Activated CD4-positive, alpha-beta T cell treated with anti-CD3 and anti-CD28 coated beads for 36 hours (primary cell): ENCODE measurements at regions of chr1 and their contacts with region 1.

Region 1: DNA sequence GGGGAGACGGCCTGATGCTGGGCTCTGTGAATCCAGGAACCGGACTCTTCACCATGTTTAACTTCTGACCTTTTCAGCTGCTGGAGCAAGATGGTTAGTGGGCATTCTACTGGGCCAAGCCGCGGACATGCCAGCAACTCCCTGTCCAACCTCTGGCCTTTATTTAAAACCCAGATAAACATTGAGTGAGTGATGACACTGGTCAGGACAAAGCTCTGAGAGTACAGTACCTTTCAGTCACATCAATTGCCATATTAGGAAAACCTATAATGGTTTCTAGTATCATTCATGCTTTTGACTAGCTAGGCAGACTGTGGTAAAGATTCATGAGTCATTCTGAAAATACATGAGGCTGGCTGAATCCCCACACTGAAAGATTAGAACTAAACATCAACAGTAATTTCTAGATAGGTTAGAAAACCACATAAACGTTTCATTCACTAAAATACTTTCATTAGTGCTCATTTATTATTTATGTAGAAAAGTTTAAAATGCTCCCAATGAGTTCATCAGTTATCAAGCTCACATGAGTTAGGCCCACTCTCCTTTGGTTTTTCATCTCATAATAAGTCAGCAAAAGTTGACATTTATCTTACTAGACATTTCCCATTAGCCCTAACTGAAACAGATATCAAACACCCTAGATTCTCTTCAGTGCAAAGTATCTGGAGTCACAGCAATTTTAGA is 7.1 kb upstream of the ACTA1 start:
- DNase-seq: peak; percentile 20
- ATAC-seq: peak; percentile 94
- H3K4me3 Mint-ChIP-seq: no peak overlapping the region
- H3K27ac Mint-ChIP-seq: peak overlapping the region; percentile 52
- H3K4me1 Mint-ChIP-seq: peaks cover 23% of the 10 kb centered on the region
- H3K27me3 Mint-ChIP-seq: peaks cover 11% of the 10 kb centered on the region

Region 2: DNA sequence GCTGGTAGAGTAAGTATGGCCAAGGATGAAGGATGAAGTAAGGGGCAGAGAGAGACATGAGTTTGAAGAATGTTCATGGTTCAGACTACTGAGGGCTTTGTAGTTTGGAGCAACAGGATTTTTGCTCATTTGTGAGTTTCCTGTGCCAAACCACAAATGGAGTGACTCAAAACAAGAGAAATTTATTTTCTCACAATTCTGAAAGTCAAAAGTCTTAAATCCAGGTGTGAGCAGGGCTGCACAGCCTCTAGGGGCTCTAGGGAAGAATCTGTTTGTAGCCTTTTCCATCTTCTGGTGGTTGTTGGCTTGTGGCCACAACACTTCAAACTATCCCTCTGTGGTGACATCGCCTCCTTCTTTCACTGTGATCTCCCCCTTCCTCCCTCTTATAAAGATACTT is 646.8 kb before region 1 on chr1:
- CTCF ChIA-PET with region 1: no interaction called
- POLR2A ChIA-PET with region 1: no interaction called
- intact Hi-C with region 1: loop called in 1 of 2 experiments (anchors 2 kb)
- DNase-seq: peak; percentile 60
- ATAC-seq: peak; percentile 70
- H3K4me3 Mint-ChIP-seq: no peak overlapping the region
- H3K27ac Mint-ChIP-seq: no peak overlapping the region
- H3K4me1 Mint-ChIP-seq: peaks cover 6% of the 10 kb centered on the region
- H3K27me3 Mint-ChIP-seq: no peaks in the 10 kb centered on the region

Region 3: DNA sequence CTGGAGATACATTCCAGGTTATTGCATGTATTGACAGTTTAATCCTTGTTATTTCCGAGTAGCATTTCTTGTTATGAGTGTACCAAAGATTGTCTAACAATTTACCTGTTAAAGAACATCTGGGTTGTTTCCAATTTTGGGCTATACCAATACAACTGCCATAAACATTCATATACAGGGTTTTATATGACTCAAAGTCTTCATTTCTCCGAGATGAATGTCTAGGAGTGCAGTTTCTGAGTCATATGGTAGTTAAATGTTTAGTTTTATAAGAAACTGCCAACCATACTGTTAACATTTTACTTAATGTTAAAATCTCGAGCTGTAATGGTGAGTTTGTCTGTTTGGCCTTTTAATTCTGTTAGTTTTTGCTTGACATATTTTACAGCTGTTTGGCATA is 160.1 kb before region 1 on chr1:
- CTCF ChIA-PET with region 1: no interaction called
- POLR2A ChIA-PET with region 1: no interaction called
- intact Hi-C with region 1: loop called (anchors 1 to 2 kb)
- DNase-seq: no peak
- ATAC-seq: peak; percentile 85
- H3K4me3 Mint-ChIP-seq: no peak overlapping the region
- H3K27ac Mint-ChIP-seq: no peak overlapping the region
- H3K4me1 Mint-ChIP-seq: peaks cover 36% of the 10 kb centered on the region
- H3K27me3 Mint-ChIP-seq: no peaks in the 10 kb centered on the region

Region 4: GRCh38 chr1:229341774-229342655 is 99.0 kb before region 1 on chr1:
- CTCF ChIA-PET with region 1: no interaction called
- POLR2A ChIA-PET with region 1: interaction called, 4 read pairs
- intact Hi-C with region 1: loop called (anchors 1 kb)
- DNase-seq: peak; percentile 85
- ATAC-seq: peak; percentile 76
- H3K4me3 Mint-ChIP-seq: peak overlapping the region; percentile 88
- H3K27ac Mint-ChIP-seq: peak overlapping the region; percentile 77
- H3K4me1 Mint-ChIP-seq: peaks cover 45% of the 10 kb centered on the region
- H3K27me3 Mint-ChIP-seq: peaks cover 9% of the 10 kb centered on the region

Region 5: DNA sequence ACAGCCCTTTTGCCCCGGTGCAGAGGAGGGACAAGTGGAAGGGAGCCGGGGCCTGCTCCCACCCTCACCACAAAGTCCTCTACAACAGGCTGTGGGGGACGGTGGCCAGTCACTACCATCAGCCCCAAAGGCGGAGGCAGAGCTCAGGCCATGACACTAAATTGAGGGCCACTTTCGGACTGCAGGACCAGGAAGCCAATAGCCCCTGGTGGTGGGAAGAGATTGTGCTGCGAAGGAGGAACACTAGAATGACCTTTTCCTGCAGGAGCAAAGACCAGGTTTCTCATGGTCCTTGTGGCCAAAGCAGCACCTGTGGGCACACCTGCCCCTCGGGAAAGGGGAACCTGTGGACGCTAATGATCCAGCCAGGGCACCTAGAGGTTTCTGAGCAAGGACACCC is 37.4 kb before region 1 on chr1:
- CTCF ChIA-PET with region 1: no interaction called
- POLR2A ChIA-PET with region 1: no interaction called
- intact Hi-C with region 1: no loop called
- DNase-seq: no peak
- ATAC-seq: no peak
- H3K4me3 Mint-ChIP-seq: no peak overlapping the region
- H3K27ac Mint-ChIP-seq: no peak overlapping the region
- H3K4me1 Mint-ChIP-seq: peaks cover 7% of the 10 kb centered on the region
- H3K27me3 Mint-ChIP-seq: peaks cover 44% of the 10 kb centered on the region

Region 6: DNA sequence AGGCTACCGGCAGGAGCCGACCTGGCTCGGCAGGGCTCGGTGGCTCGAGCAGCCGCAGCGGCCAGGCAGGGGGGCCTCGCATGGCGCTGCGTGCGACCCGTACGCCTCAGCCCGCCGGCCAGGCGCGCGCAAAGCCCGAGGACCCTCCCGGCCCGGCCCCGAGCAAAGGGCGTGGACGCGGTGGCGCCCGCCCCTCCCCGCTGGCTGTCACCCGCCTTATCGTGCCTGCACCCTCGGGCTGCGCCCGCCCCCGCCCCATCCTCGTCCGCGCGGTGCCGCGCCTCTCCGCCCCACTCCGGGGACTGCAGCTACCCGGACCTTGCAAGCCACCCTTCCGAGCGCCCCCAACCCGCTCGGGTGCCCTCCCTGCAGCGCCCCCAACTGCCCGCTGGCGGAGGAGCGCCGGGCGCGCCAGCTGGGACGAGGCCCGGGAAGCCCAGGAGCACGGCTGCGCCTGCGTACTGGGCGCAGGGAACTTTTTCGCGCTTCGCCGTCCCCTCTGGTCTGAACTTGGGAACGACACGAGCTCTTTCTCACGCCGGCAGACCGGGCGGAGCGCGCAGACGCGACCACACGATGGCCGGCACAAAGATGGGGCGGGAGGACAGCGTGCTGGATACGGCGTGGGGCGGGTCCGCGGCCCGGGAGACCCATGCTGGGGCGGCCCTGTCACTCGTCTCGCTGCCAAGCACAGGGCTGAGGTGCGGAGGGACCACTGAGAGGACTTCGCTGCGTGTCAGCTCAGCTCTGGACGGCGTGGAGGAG is 117.8 kb after region 1 on chr1 and contains the start of gene ABCB10:
- CTCF ChIA-PET with region 1: interaction called, 6 read pairs
- POLR2A ChIA-PET with region 1: no interaction called
- intact Hi-C with region 1: loop called in 1 of 2 experiments (anchors 1 kb)
- DNase-seq: peak; percentile 94
- ATAC-seq: peak; percentile 83
- H3K4me3 Mint-ChIP-seq: peak within 1 kb of the TSS; percentile 86
- H3K27ac Mint-ChIP-seq: peak within 1 kb of the TSS; percentile 89
- H3K4me1 Mint-ChIP-seq: peaks cover 34% of the 10 kb centered on the region
- H3K27me3 Mint-ChIP-seq: no peaks in the 10 kb centered on the region
- total RNA-seq, gene ABCB10: 18.4 to 30.1 TPM

Region 7: DNA sequence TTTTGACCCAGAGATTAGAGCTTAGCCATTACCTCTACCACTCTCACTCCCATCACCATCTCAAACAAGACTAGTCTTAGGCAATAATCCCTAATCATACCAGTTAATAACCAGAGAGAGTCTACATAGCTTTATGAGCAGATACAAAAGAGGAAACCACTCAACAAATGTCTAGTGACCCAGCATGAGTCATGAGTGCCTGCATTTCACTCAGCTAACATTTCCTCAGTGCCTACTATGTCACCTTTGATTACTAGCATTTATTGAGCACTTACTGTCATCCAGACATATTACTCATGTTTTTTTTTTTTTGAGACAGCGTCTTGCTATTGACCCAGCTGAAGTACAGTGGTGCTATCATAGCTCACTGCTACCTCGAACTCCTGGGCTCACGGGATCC is 590.1 kb after region 1 on chr1:
- CTCF ChIA-PET with region 1: no interaction called
- POLR2A ChIA-PET with region 1: no interaction called
- intact Hi-C with region 1: loop called in 1 of 2 experiments (anchors 1 kb)
- DNase-seq: peak; percentile 45
- ATAC-seq: peak; percentile 97
- H3K4me3 Mint-ChIP-seq: no peak overlapping the region
- H3K27ac Mint-ChIP-seq: peak overlapping the region; percentile 68
- H3K4me1 Mint-ChIP-seq: peaks cover 20% of the 10 kb centered on the region
- H3K27me3 Mint-ChIP-seq: no peaks in the 10 kb centered on the region